ENCODE measurements at regions of chr11 and their contacts with region 1.

Region 1: DNA sequence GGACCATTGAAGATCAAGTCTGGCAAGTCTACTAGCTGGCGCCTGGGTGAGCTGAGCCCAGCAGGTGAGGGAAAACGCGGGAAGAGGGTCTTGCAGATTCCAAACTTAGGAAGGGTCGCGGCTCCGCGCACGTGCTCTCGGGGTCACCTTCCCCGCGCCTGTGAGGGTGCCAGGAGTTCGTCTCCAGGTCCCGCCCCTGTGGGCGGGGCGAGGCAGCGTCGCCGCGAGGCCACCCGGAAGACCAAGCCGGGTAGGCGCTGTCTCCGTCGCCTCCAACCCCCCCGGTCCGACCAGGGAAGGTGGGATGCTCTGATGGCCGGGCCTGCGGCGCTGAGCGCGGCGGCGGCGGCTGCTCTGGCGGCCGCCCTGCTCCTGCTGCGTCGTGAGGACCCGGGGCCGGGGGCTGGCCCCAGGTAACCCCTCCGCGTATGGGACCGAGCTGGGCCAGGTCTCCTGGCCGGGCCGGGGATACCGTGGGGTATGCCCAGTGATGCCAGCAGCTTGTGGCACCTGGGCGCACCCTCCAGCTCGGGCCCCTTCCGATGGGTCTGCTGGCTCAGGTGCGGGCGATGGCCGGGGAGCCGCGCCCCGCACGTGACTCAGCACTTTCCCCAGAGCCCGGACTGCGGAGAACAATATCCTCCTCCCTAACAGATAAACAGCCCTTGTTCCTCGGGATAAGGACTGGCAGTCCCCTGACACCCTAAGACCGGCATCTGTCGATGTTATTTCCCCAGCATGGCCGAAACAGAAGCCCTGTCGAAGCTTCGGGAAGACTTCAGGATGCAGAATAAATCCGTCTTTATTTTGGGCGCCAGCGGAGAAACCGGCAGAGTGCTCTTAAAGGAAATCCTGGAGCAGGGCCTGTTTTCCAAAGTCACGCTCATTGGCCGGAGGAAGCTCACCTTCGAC is at the start of gene HTATIP2:
- DNase-seq: peak; percentile 40 to 57
- H3K4me3 ChIP-seq: peak within 1 kb of the TSS; percentile 76
- H3K27ac ChIP-seq: peak within 1 kb of the TSS; percentile 86
- H3K4me1 ChIP-seq: peaks cover 41% of the 10 kb centered on the region
- H3K27me3 ChIP-seq: no peaks in the 10 kb centered on the region
- CTCF ChIP-seq: no peak
- total RNA-seq, gene HTATIP2: 180 and 194 TPM in 2 replicates

Region 2: GRCh38 chr11:20278727-20279126 is 85.0 kb before region 1 on chr11:
- CTCF ChIA-PET with region 1: no interaction called
- POLR2A ChIA-PET with region 1: no interaction called
- intact Hi-C with region 1: no loop called
- DNase-seq: no peak
- H3K4me3 ChIP-seq: no peak overlapping the region
- H3K27ac ChIP-seq: no peak overlapping the region
- H3K4me1 ChIP-seq: no peaks in the 10 kb centered on the region
- H3K27me3 ChIP-seq: peaks cover 72% of the 10 kb centered on the region
- CTCF ChIP-seq: no peak

Region 3: DNA sequence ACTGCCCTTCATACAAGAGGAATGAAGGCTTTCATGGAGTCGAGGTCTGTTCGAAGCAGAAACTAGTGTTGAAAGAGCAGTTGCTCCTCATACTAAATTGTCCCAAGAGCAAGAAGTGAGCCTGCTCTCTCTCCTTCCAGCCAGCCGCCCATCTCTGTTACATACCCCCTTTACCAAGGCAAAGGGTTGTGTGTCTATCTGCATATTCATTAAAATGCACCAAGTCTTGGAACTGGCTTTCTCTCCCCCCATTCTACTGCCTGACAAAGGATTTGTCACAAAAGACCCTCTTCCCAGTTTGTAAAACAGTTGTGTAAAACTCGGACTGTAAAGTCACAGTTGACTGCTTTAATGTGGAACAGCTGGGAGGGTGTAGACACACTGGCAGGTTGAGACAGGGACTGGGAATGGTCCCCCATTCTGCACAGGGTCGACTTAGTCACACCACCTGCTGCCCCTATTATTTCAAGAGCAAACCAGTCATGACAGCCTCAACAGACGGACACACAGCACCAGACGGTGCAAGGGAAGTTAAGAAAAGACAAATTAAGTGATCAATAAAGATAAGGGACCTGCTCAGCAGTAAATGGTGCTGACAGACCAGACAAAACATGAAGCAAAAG is 60.3 kb before region 1 on chr11:
- CTCF ChIA-PET with region 1: no interaction called
- POLR2A ChIA-PET with region 1: no interaction called
- intact Hi-C with region 1: no loop called
- DNase-seq: no peak
- H3K4me3 ChIP-seq: no peak overlapping the region
- H3K27ac ChIP-seq: no peak overlapping the region
- H3K4me1 ChIP-seq: no peaks in the 10 kb centered on the region
- H3K27me3 ChIP-seq: peaks cover 55% of the 10 kb centered on the region
- CTCF ChIP-seq: no peak

Region 4: GRCh38 chr11:20387241-20388095 is 23.7 kb after region 1 on chr11 and contains the start of gene PRMT3:
- CTCF ChIA-PET with region 1: no interaction called
- POLR2A ChIA-PET with region 1: no interaction called
- intact Hi-C with region 1: loop called (anchors 1 kb)
- DNase-seq: peak; percentile 80 to 96
- H3K4me3 ChIP-seq: peak within 1 kb of the TSS; percentile 83
- H3K27ac ChIP-seq: peak within 1 kb of the TSS; percentile 82
- H3K4me1 ChIP-seq: peaks cover 14% of the 10 kb centered on the region; the same call in 1 of the 2 replicates
- H3K27me3 ChIP-seq: no peaks in the 10 kb centered on the region
- CTCF ChIP-seq: peak; percentile 96
- total RNA-seq, gene PRMT3: 20.9 and 23.6 TPM in 2 replicates

Measured in PC-9 (cell line).